ENCODE measurements at regions of chr17 and their contacts with region 1.

Region 1: GRCh38 chr17:41665566-41666236 is 23.0 kb upstream of the EIF1 start:
- DNase-seq: peak; percentile 91
- H3K4me3 Mint-ChIP-seq: peak overlapping the region; percentile 90
- H3K27ac Mint-ChIP-seq: peak overlapping the region; percentile 98
- H3K4me1 Mint-ChIP-seq: peaks cover 39% of the 10 kb centered on the region
- H3K27me3 Mint-ChIP-seq: no peaks in the 10 kb centered on the region

Region 2: GRCh38 chr17:40317880-40318829 is 1347.5 kb before region 1 on chr17:
- CTCF ChIA-PET with region 1: no interaction called
- intact Hi-C with region 1: loop called (anchors 10 kb)
- DNase-seq: peak; percentile 94
- H3K4me3 Mint-ChIP-seq: peak overlapping the region; percentile 85
- H3K27ac Mint-ChIP-seq: peak overlapping the region; percentile 90
- H3K4me1 Mint-ChIP-seq: peaks cover 75% of the 10 kb centered on the region
- H3K27me3 Mint-ChIP-seq: no peaks in the 10 kb centered on the region

Region 3: GRCh38 chr17:40803617-40804082 is 862.1 kb before region 1 on chr17:
- CTCF ChIA-PET with region 1: interaction called, 9 read pairs
- intact Hi-C with region 1: loop called (anchors 2 kb)
- DNase-seq: peak; percentile 90
- H3K4me3 Mint-ChIP-seq: no peak overlapping the region
- H3K27ac Mint-ChIP-seq: no peak overlapping the region
- H3K4me1 Mint-ChIP-seq: no peaks in the 10 kb centered on the region
- H3K27me3 Mint-ChIP-seq: peaks cover 23% of the 10 kb centered on the region

Region 4: GRCh38 chr17:41403798-41404671 is 261.7 kb before region 1 on chr17:
- CTCF ChIA-PET with region 1: interaction called, 5 read pairs
- intact Hi-C with region 1: loop called (anchors 1 kb)
- DNase-seq: peak; percentile 85
- H3K4me3 Mint-ChIP-seq: no peak overlapping the region
- H3K27ac Mint-ChIP-seq: peak overlapping the region; percentile 79
- H3K4me1 Mint-ChIP-seq: peaks cover 46% of the 10 kb centered on the region
- H3K27me3 Mint-ChIP-seq: no peaks in the 10 kb centered on the region

Region 5: GRCh38 chr17:41579484-41580243 is 86.0 kb before region 1 on chr17:
- CTCF ChIA-PET with region 1: interaction called, 10 read pairs
- intact Hi-C with region 1: no loop called
- DNase-seq: peak; percentile 91
- H3K4me3 Mint-ChIP-seq: no peak overlapping the region
- H3K27ac Mint-ChIP-seq: no peak overlapping the region
- H3K4me1 Mint-ChIP-seq: no peaks in the 10 kb centered on the region
- H3K27me3 Mint-ChIP-seq: peaks cover 35% of the 10 kb centered on the region

Region 6: DNA sequence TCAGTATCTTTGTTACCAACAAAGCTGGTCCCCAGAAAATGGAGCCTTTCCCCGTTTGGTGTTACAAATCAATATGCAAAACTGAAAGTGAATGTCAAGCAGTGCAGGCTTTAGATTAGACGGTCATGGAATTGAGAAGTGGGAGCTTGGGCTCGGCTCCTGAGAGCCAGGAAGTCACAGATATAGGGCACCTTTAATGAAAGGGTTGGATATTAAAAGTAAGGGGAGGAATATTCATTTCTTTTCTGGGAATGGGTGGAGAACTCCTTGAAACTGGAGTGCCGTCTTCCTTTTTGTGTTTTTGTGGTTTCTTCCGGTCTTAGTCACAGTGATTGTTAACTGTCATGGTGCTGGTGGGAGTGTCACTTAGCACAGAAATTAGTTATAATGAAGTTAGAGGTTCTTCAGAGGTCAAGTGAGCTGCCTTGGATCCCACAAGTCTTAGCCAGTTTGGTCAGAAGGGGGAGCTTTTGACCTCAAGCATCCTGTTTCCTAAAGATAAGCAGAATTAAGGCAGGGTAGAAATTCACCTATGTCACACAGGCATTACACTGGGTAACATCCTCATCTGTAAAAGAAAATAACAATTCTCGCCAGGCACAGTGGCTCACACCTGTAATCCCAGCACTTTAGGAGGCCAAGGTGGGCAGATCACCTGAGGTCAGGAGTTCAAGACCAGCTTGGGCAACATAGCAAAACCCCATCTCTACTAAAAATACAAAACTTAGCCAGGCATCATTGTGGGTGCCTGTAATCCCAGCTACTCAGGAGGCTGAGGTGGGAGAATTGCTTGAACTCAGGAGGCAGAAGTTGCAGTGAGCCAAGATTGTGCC is 13.4 kb after region 1 on chr17:
- CTCF ChIA-PET with region 1: interaction called, 69 read pairs
- intact Hi-C with region 1: loop called (anchors 1 kb)
- DNase-seq: peak; percentile 87
- H3K4me3 Mint-ChIP-seq: peak overlapping the region; percentile 83
- H3K27ac Mint-ChIP-seq: peak overlapping the region; percentile 98
- H3K4me1 Mint-ChIP-seq: peaks cover 45% of the 10 kb centered on the region
- H3K27me3 Mint-ChIP-seq: no peaks in the 10 kb centered on the region

Region 7: DNA sequence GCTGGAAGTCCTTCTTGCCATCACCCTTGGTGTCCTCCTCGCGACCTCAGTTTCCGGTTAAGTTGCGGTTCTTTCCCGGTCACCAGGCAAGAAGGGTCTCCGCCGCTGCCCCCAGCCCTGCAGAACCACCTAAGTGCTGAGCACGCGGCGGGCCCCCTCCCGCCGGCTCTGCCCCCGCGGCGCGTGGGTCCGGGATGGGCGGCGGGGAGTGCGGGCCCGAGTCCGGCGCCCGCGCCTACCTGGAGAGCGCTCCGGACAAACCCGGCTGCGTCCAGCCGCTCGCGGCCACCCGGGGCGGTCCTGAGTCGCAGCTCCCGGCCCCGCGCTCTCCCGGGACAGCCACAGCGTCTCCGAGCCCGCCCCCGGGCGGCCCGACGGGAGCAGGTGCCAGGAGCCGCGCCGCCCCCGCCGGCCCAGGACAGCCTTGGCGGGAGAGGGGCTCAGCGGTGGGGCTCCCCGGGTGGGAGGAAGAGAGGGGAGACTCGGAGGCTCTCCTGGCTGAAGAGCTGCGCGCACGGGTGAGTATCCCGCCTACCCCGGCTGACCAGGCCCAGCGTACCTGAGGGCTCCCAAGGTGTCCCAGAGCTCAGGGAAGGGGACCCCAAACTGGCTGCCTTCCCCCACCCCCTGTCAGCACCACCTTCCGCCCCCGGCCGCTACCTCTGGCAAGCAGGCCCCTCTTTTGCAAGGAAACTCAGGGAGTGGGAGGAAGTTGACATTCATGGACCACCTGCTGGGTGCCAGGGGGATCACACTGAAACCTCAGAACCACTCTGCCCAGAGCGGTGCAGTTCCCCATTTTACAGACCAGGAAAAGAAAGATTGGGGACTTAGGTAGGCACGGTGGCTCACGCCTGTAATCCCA is 406.9 kb after region 1 on chr17:
- CTCF ChIA-PET with region 1: no interaction called
- intact Hi-C with region 1: no loop called
- DNase-seq: no peak
- H3K4me3 Mint-ChIP-seq: no peak overlapping the region
- H3K27ac Mint-ChIP-seq: no peak overlapping the region
- H3K4me1 Mint-ChIP-seq: peaks cover 8% of the 10 kb centered on the region
- H3K27me3 Mint-ChIP-seq: peaks cover 27% of the 10 kb centered on the region